ENCODE measurements at regions of chr11 and their contacts with region 1.

Region 1: GRCh38 chr11:1832211-1832919 is 2.4 kb upstream of the SYT8 start:
- H3K4me3 ChIP-seq: no peak overlapping the region
- H3K27ac ChIP-seq: no peak overlapping the region
- H3K4me1 ChIP-seq: no peaks in the 10 kb centered on the region
- CTCF ChIP-seq: peak; percentile 85

Region 2: GRCh38 chr11:494761-495536 is 1337.4 kb before region 1 on chr11:
- CTCF ChIA-PET with region 1: no interaction called
- POLR2A ChIA-PET with region 1: no interaction called
- H3K4me3 ChIP-seq: no peak overlapping the region
- H3K27ac ChIP-seq: no peak overlapping the region
- H3K4me1 ChIP-seq: no peaks in the 10 kb centered on the region
- CTCF ChIP-seq: no peak

Region 3: GRCh38 chr11:1674173-1675131 is 157.9 kb before region 1 on chr11:
- CTCF ChIA-PET with region 1: interaction called, 14 read pairs
- POLR2A ChIA-PET with region 1: no interaction called
- H3K4me3 ChIP-seq: no peak overlapping the region
- H3K27ac ChIP-seq: no peak overlapping the region
- H3K4me1 ChIP-seq: no peaks in the 10 kb centered on the region
- CTCF ChIP-seq: no peak

Region 4: DNA sequence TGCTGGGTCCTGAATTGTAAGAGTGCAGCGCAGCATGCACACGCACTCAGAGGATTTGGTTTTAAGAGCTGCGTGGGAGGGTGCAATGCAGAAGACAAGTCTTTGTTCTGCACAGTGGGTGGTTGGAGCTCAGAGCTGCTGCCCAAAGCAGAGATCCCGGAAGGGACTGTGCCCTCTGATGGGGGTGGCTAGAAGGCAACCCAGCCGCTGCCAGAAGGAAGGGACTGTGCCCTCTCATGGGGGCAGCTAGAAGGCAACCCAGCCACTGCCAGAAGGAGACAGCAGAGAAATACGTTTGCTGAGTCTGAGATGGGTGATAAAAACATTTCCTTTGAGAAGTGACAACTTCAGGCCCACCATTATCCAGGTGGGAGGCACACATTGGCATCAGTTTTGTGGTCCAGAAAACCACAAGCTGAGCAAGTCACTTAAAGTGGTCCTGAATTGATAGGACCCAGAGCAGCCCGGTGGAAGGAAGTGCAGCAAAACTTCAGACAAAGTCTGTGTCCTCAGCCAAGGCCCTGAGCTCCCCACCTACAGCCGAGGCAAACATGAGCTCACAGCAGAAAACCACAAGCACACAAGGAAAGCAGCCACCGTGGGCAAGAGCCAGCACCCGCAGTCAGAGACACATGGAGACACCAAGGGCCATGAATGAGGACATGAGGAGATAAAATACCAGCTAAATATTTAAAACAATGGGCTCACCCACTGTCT is 131.1 kb before region 1 on chr11:
- CTCF ChIA-PET with region 1: interaction called, 38 read pairs
- POLR2A ChIA-PET with region 1: no interaction called
- H3K4me3 ChIP-seq: no peak overlapping the region
- H3K27ac ChIP-seq: no peak overlapping the region
- H3K4me1 ChIP-seq: no peaks in the 10 kb centered on the region
- CTCF ChIP-seq: no peak

Region 5: DNA sequence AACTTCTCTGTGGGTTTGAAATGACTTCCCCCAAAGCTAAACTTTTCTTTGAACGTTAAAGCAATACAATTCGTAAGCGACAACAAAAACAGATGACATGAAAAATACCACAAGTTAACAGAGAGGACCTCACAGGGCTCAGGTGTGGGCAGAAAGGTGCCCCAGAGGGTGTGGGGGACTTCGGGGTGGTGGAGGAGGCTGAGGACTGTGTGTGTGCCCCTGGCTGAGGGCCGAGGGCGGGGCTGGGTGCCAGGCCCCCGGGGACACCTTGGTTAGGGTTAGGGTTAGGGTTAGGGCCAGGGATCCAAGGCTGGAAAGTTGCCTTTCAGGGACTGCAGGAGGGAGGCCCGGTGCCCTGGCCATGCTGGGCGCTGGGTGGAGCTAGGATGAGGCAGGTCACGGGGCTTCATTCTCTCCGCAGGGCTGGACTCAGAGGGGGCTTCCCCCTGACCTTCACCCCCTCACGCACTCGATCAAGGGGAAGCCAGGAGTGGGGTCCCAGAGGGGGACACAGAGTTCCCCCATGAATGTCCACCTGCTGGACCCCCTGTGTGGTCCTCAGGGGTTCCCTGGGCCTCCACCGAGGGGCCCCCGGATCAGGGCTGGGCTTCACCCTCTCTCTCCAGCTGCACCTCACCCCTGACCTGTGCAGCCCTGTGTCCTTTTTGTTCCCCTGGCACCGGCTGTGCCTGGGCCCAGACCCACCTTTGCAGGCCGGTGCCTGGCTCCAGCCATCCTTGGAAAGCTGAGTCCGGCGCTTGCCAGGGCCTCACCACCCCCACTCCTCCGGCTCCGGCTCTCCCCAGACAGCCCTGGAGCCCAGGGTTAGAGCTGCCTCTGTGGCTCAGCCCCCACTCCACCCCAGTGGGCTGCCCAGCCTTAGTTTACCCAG is 13.4 kb after region 1 on chr11:
- CTCF ChIA-PET with region 1: interaction called, 18 read pairs
- POLR2A ChIA-PET with region 1: no interaction called
- H3K4me3 ChIP-seq: no peak overlapping the region
- H3K27ac ChIP-seq: no peak overlapping the region
- H3K4me1 ChIP-seq: no peaks in the 10 kb centered on the region
- CTCF ChIP-seq: no peak

Region 6: DNA sequence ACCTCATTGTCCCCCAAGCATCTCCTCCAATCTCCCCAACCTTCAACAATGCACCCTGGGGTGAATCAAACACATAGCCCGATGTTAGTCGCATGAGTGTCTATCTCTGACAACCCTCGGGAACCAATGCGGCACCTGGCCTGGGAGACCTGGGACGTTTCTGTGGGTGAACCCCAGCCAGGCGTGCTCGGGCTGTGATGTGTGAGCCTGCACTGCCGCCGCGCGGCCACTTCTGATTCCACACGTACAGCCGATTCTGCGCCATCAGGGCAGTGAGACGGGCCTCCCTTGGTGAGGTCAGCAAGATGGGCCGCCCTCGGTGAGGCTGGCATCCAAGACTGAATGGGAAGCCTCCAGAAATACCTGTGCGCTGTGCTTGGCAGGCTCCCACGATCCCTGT is 170.4 kb after region 1 on chr11:
- CTCF ChIA-PET with region 1: interaction called, 10 read pairs
- POLR2A ChIA-PET with region 1: no interaction called
- H3K4me3 ChIP-seq: no peak overlapping the region
- H3K27ac ChIP-seq: no peak overlapping the region
- H3K4me1 ChIP-seq: no peaks in the 10 kb centered on the region
- CTCF ChIP-seq: no peak

Measured in HEK293 (cell line).